ENCODE measurements at regions of chr5 and their contacts with region 1.

Region 1: DNA sequence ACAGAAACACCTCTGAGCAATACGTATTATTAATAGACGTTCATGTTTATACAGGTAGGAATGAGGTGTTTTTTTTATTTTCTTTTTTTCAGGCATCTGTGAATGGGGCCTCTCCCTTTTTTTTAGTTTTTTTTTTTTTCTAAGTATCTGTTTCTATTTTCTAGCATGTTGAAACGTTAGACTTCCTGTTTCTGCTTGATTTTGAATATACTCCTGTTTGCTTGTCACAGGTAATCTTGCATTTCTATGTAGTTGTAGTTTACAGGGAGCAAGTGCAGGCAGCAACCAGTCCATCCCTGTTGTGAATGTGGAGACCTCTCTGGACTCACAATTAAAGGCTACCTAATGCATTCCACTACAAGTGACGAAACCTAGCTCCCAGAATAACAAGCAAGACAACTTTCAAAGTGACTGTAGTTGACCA is 22.8 kb upstream of the TNFAIP8 start:
- DNase-seq: no peak
- ATAC-seq: no peak

Region 2: GRCh38 chr5:119397518-119398380 is 64.8 kb after region 1 on chr5:
- intact Hi-C with region 1: loop called (anchors 10 kb)
- DNase-seq: no peak
- ATAC-seq: no peak